ENCODE measurements at regions of chr19 and their contacts with region 1.

Region 1: DNA sequence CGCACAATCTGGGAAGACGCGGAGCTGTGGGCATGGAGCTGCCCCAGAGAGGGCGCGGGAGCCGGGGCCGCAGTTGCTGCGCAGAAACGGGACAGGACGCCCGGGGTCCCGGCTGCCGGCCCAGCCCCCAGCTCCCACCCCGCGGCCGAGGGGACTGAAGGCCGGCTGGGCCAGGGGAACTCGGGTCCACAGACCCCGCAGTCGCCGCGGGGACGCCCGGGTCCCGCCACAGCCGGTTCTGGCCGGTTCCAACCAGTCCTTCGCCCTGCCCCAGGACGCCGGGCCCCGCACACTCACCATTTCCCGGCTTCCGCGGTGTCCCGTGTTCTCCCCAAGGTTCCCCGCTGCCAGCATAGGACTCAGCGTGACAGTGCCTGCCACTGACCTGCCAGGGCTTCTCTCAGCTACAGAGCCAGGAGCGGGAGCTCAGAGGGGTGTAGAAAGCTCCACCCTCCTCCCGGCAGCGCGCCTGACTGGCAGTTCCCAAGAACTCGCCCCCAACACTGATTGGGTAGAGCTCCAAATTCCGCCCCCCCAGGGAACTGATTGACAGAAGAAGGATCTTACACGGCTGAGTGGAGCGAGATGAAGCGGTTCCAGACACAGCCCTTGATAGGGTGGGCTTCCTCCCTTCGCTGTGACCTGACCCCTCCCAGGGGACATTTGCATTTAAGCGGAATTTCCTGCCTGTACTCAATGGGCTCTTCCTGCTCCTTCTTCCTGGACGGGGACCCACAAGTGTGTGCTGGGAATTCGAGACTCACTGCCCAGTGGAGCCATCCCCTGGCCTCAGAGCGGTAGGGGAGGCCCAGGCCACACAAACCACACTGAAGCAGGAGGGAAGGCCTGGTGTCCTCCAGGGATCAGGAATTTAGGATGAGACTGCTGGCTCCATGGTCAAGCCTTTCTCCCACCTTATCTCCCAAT is at the start of gene ZNF442:
- DNase-seq: peak; percentile 86
- ATAC-seq: peak; percentile 97
- H3K4me3 ChIP-seq: peak within 1 kb of the TSS; percentile 24 to 85 (median 82)
- H3K4me3 Mint-ChIP-seq: peak within 1 kb of the TSS; percentile 98
- H3K27ac ChIP-seq: peak within 1 kb of the TSS; percentile 49 to 67
- H3K27ac Mint-ChIP-seq: peak within 1 kb of the TSS; percentile 93
- H3K4me1 ChIP-seq: peaks cover 7 to 16% of the 10 kb centered on the region in 2 donors
- H3K4me1 Mint-ChIP-seq: peaks cover 27% of the 10 kb centered on the region
- H3K27me3 ChIP-seq: no peaks in the 10 kb centered on the region
- H3K27me3 Mint-ChIP-seq: no peaks in the 10 kb centered on the region
- CTCF ChIP-seq: peak; percentile 24
- total RNA-seq, gene ZNF442: 6.9 and 8.4 TPM in 2 replicates

Region 2: GRCh38 chr19:10998045-10998533 is 1367.4 kb before region 1 on chr19:
- CTCF ChIA-PET with region 1: no interaction called
- POLR2A ChIA-PET with region 1: no interaction called
- intact Hi-C with region 1: no loop called
- DNase-seq: no peak
- ATAC-seq: no peak
- H3K4me3 ChIP-seq: no peak overlapping the region
- H3K4me3 Mint-ChIP-seq: no peak overlapping the region
- H3K27ac ChIP-seq: no peak overlapping the region
- H3K27ac Mint-ChIP-seq: no peak overlapping the region
- H3K4me1 ChIP-seq: no peaks in the 10 kb centered on the region
- H3K4me1 Mint-ChIP-seq: no peaks in the 10 kb centered on the region
- H3K27me3 ChIP-seq: no peaks in the 10 kb centered on the region
- H3K27me3 Mint-ChIP-seq: no peaks in the 10 kb centered on the region
- CTCF ChIP-seq: no peak

Region 3: DNA sequence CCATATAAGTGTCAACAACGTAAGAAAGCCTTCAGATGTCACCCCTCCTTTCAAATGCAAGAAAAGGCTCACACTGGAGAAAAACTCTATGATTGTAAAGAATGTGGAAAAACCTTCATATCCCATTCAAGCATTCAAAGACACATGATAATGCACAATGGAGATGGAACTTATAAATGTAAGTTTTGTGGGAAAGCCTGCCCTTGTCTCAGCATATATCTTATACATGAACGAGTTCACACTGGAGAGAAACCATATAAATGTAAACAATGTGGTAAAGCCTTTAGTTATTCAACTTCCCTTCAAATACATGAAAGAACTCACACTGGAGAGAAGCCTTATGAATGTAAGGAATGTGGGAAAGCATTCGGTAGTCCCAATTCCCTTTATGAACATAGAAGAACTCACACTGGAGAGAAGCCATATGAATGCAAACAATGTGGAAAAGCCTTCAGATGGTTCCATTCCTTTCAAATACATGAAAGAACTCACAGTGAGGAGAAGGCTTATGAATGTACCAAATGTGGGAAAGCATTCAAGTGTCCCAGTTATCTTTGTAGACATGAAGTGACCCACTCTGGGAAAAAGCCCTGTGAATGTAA is 289.9 kb before region 1 on chr19:
- CTCF ChIA-PET with region 1: no interaction called
- POLR2A ChIA-PET with region 1: no interaction called
- intact Hi-C with region 1: no loop called
- DNase-seq: no peak
- ATAC-seq: no peak
- H3K4me3 ChIP-seq: peak overlapping the region in 1 of 5 experiments; percentile 12
- H3K4me3 Mint-ChIP-seq: no peak overlapping the region
- H3K27ac ChIP-seq: no peak overlapping the region
- H3K27ac Mint-ChIP-seq: no peak overlapping the region
- H3K4me1 ChIP-seq: no peaks in the 10 kb centered on the region
- H3K4me1 Mint-ChIP-seq: no peaks in the 10 kb centered on the region
- H3K27me3 ChIP-seq: no peaks in the 10 kb centered on the region
- H3K27me3 Mint-ChIP-seq: no peaks in the 10 kb centered on the region
- CTCF ChIP-seq: no peak

Region 4: GRCh38 chr19:12294249-12295158 is 71.0 kb before region 1 on chr19 and contains the start of gene ZNF44:
- CTCF ChIA-PET with region 1: interaction called, 4 read pairs
- POLR2A ChIA-PET with region 1: interaction called, 7 read pairs
- intact Hi-C with region 1: loop called (anchors 1 kb)
- DNase-seq: peak; percentile 95
- ATAC-seq: peak; percentile 96
- H3K4me3 ChIP-seq: peak within 1 kb of the TSS; percentile 57 to 96 (median 91)
- H3K4me3 Mint-ChIP-seq: peak within 1 kb of the TSS; percentile 99
- H3K27ac ChIP-seq: peak within 1 kb of the TSS; percentile 82 to 89
- H3K27ac Mint-ChIP-seq: peak within 1 kb of the TSS; percentile 94
- H3K4me1 ChIP-seq: peaks cover 8 to 17% of the 10 kb centered on the region in 2 donors
- H3K4me1 Mint-ChIP-seq: peaks cover 31% of the 10 kb centered on the region
- H3K27me3 ChIP-seq: no peaks in the 10 kb centered on the region
- H3K27me3 Mint-ChIP-seq: no peaks in the 10 kb centered on the region
- CTCF ChIP-seq: no peak
- total RNA-seq, gene ZNF44: 27.8 and 28.0 TPM in 2 replicates

Region 5: DNA sequence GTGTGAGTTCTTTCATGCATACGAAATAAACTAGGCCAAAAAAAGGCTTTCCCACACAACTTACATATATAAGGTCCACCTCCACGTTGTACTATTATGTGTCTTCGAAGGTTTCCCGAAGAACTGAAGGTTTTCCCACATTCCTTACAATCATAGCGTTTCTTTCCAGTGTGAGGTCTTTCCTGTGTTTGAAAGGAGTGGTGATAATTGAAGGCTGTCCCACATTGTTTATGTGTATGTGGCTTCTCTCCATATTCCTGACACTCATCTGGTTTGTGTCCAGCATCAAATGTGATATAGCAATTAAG is 14.7 kb before region 1 on chr19:
- CTCF ChIA-PET with region 1: no interaction called
- POLR2A ChIA-PET with region 1: no interaction called
- intact Hi-C with region 1: no loop called
- DNase-seq: no peak
- ATAC-seq: no peak
- H3K4me3 ChIP-seq: no peak overlapping the region
- H3K4me3 Mint-ChIP-seq: no peak overlapping the region
- H3K27ac ChIP-seq: no peak overlapping the region
- H3K27ac Mint-ChIP-seq: no peak overlapping the region
- H3K4me1 ChIP-seq: no peaks in the 10 kb centered on the region
- H3K4me1 Mint-ChIP-seq: no peaks in the 10 kb centered on the region
- H3K27me3 ChIP-seq: no peaks in the 10 kb centered on the region
- H3K27me3 Mint-ChIP-seq: no peaks in the 10 kb centered on the region
- CTCF ChIP-seq: no peak

Region 6: GRCh38 chr19:12400633-12401502 is 35.4 kb after region 1 on chr19 and contains the start of gene ZNF799:
- CTCF ChIA-PET with region 1: no interaction called
- POLR2A ChIA-PET with region 1: interaction called, 5 read pairs
- intact Hi-C with region 1: loop called (anchors 1 kb)
- DNase-seq: peak; percentile 89
- ATAC-seq: peak; percentile 91
- H3K4me3 ChIP-seq: peak within 1 kb of the TSS; percentile 61 to 93 (median 90)
- H3K4me3 Mint-ChIP-seq: peak within 1 kb of the TSS; percentile 91
- H3K27ac ChIP-seq: peak within 1 kb of the TSS in 1 of 2 donors; percentile 68
- H3K27ac Mint-ChIP-seq: peak within 1 kb of the TSS; percentile 85
- H3K4me1 ChIP-seq: peaks cover 4 to 7% of the 10 kb centered on the region in 2 donors
- H3K4me1 Mint-ChIP-seq: peaks cover 20% of the 10 kb centered on the region
- H3K27me3 ChIP-seq: no peaks in the 10 kb centered on the region
- H3K27me3 Mint-ChIP-seq: no peaks in the 10 kb centered on the region
- CTCF ChIP-seq: no peak
- total RNA-seq, gene ZNF799: 10.5 and 11.1 TPM in 2 replicates

Region 7: DNA sequence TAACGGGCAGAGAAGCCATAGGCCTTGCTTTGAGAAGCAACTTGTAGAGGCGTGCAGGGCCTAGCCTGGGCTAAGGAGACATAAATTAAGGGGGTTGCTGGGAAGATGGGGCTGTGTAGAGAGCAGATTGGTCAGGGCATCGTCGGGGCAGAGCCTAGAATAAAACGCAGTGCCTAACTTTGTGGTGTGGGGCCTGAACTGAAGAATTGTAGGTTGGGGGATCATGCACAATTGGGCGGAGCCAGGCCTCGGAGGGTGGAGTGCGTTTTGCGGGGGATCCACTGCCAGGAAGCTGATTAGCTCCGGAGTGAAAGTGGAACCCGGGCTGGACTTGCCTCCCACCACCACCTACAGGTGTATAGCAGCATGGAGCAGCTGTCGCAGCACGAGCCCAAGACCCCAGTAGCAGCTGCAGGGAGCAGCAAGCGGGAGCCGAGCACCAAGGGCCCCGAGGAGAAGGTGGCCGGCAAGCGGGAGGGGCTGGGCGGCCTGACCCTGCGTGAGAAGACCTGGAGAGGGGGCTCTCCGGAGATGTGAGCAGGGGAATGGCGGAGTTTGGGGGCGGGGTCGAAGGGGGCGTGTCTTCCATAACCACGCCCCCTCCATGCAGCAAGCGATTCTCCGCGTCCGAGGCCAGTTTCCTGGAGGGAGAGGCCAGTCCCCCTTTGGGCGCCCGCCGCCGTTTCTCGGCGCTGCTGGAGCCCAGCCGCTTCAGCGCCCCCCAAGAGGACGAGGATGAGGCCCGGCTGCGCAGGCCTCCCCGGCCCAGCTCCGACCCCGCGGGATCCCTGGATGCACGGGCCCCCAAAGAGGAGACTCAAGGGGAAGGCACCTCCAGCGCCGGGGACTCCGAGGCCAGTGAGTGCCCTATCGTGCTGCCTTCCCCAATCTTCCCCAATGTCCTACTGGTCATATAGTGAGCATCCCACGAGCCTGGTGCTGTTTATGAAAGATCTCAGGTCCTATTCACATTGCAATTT is 501.9 kb after region 1 on chr19:
- CTCF ChIA-PET with region 1: no interaction called
- POLR2A ChIA-PET with region 1: no interaction called
- intact Hi-C with region 1: no loop called
- DNase-seq: peak; percentile 91
- ATAC-seq: peak; percentile 89
- H3K4me3 ChIP-seq: peak overlapping the region; percentile 21 to 70 (median 63)
- H3K4me3 Mint-ChIP-seq: peak overlapping the region; percentile 91
- H3K27ac ChIP-seq: peak overlapping the region in 1 of 2 donors; percentile 20
- H3K27ac Mint-ChIP-seq: peak overlapping the region; percentile 77
- H3K4me1 ChIP-seq: peaks cover 0 to 11% of the 10 kb centered on the region in 2 donors
- H3K4me1 Mint-ChIP-seq: peaks cover 8% of the 10 kb centered on the region
- H3K27me3 ChIP-seq: peaks cover 0 to 2% (median 0%) of the 10 kb centered on the region in 4 experiments
- H3K27me3 Mint-ChIP-seq: peaks cover 6% of the 10 kb centered on the region
- CTCF ChIP-seq: no peak

Measured in B cell (primary cell).